ENCODE measurements at regions of chr1 and their contacts with region 1.

Region 1: DNA sequence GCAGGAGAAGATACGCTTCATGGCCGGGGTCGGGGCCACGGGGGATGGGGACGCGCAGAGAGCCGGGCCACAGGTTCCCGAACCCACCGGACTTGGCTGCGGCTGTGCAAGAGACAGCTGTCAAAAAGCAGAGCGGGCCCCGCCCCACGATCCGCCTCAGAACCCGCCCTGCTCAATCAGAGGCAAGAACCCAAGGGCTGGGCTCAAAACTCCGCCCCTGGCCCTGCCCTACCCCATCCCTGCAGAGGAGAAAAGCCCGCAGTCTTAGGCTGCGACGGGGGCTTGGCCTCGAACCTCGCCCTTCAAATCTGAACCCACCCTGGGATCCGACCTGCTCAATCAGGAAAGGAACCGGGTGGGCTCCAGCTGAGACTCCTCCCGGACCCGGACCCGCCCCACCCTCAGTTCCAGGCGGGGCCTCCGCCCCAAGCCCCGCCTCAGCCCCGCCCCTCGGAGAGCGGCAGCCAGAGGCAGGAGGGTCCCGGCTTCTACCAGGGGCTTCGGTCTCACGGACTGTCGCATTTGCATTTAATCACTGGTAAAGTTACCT is at the start of gene ANKRD35:
- DNase-seq: peak; percentile 64
- H3K4me3 ChIP-seq: peak within 1 kb of the TSS; percentile 59 to 62 (median 62)
- H3K27ac ChIP-seq: no peak within 1 kb of the TSS
- H3K4me1 ChIP-seq: peaks cover 15% of the 10 kb centered on the region
- H3K27me3 ChIP-seq: no peaks in the 10 kb centered on the region
- CTCF ChIP-seq: no peak
- total RNA-seq, gene ANKRD35: 0.33 to 0.66 TPM

Region 2: GRCh38 chr1:145858894-145859490 is 26.8 kb before region 1 on chr1 and contains the start of gene PIAS3:
- CTCF ChIA-PET with region 1: no interaction called
- dilution Hi-C with region 1: no loop called
- in situ Hi-C with region 1: no loop called
- intact Hi-C with region 1: loop called (anchors 1 kb)
- DNase-seq: peak; percentile 93
- H3K4me3 ChIP-seq: peak within 1 kb of the TSS; percentile 56 to 94 (median 80)
- H3K27ac ChIP-seq: peak within 1 kb of the TSS; percentile 29
- H3K4me1 ChIP-seq: peaks cover 13% of the 10 kb centered on the region
- H3K27me3 ChIP-seq: no peaks in the 10 kb centered on the region
- CTCF ChIP-seq: no peak
- total RNA-seq, gene PIAS3: 21.7 to 58.8 TPM